Activated CD4-positive, alpha-beta memory T cell treated with anti-CD3 and anti-CD28 coated beads for 36 hours (primary cell): ENCODE measurements at regions of chr18 and their contacts with region 1.

Region 1: DNA sequence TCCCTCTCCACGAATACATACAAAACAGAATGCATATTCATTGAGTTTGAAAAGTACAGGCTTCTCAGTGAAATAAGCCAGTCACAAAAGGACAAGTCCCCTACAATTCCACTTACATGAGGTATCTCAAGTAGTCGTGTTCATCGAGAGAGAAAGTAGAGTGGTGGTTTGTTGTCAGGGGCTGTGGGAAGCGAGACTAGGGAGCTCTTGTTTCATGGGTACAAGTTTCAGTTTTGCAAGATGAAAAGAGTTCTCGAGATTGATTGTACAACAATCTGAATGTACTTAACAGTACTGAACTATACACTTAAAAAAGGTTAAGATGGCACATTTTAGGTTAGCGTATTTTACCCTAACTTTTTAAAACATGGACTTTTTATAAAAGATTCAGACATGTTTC is 71.5 kb upstream of the TTC39C start:
- DNase-seq: peak; percentile 78
- H3K4me3 Mint-ChIP-seq: peak overlapping the region; percentile 13
- H3K27ac Mint-ChIP-seq: no peak overlapping the region
- H3K4me1 Mint-ChIP-seq: peaks cover 36% of the 10 kb centered on the region
- H3K27me3 Mint-ChIP-seq: peaks cover 8% of the 10 kb centered on the region

Region 2: GRCh38 chr18:23038712-23039111 is 904.4 kb before region 1 on chr18:
- CTCF ChIA-PET with region 1: no interaction called
- POLR2A ChIA-PET with region 1: no interaction called
- intact Hi-C with region 1: no loop called
- DNase-seq: no peak
- H3K4me3 Mint-ChIP-seq: no peak overlapping the region
- H3K27ac Mint-ChIP-seq: no peak overlapping the region
- H3K4me1 Mint-ChIP-seq: no peaks in the 10 kb centered on the region
- H3K27me3 Mint-ChIP-seq: no peaks in the 10 kb centered on the region

Region 3: GRCh38 chr18:23662309-23663263 is 280.5 kb before region 1 on chr18 and contains the start of gene ANKRD29:
- CTCF ChIA-PET with region 1: no interaction called
- POLR2A ChIA-PET with region 1: no interaction called
- intact Hi-C with region 1: no loop called
- DNase-seq: peak; percentile 76
- H3K4me3 Mint-ChIP-seq: peak within 1 kb of the TSS; percentile 80
- H3K27ac Mint-ChIP-seq: no peak within 1 kb of the TSS
- H3K4me1 Mint-ChIP-seq: peaks cover 16% of the 10 kb centered on the region
- H3K27me3 Mint-ChIP-seq: peaks cover 24% of the 10 kb centered on the region
- total RNA-seq, gene ANKRD29: not detected

Region 4: GRCh38 chr18:23994361-23994902 is 51.3 kb after region 1 on chr18:
- CTCF ChIA-PET with region 1: no interaction called
- POLR2A ChIA-PET with region 1: no interaction called
- intact Hi-C with region 1: loop called (anchors 2 kb)
- DNase-seq: peak; percentile 64
- H3K4me3 Mint-ChIP-seq: peak overlapping the region; percentile 76
- H3K27ac Mint-ChIP-seq: peak overlapping the region; percentile 86
- H3K4me1 Mint-ChIP-seq: peaks cover 73% of the 10 kb centered on the region
- H3K27me3 Mint-ChIP-seq: no peaks in the 10 kb centered on the region